Activated T-helper 2 cell treated with anti-CD3 and anti-CD28 coated beads, Interferon-gamma antibody, Interleukin-2, Interleukin-4, amounts not matched to agents 10 μg/mL and 5 μg/mL and 100 μg/mL, durations not matched to agents 14 hours and 24 hours and 36 hours (primary cell): ENCODE measurements at regions of chr6 and their contacts with region 1.

Region 1: GRCh38 chr6:47631269-47631772 is 67.1 kb upstream of the ADGRF4 start:
- DNase-seq: no peak
- H3K4me3 Mint-ChIP-seq: no peak overlapping the region
- H3K27ac Mint-ChIP-seq: no peak overlapping the region
- H3K4me1 Mint-ChIP-seq: peaks cover 8% of the 10 kb centered on the region
- H3K27me3 Mint-ChIP-seq: peaks cover 2% of the 10 kb centered on the region

Region 2: DNA sequence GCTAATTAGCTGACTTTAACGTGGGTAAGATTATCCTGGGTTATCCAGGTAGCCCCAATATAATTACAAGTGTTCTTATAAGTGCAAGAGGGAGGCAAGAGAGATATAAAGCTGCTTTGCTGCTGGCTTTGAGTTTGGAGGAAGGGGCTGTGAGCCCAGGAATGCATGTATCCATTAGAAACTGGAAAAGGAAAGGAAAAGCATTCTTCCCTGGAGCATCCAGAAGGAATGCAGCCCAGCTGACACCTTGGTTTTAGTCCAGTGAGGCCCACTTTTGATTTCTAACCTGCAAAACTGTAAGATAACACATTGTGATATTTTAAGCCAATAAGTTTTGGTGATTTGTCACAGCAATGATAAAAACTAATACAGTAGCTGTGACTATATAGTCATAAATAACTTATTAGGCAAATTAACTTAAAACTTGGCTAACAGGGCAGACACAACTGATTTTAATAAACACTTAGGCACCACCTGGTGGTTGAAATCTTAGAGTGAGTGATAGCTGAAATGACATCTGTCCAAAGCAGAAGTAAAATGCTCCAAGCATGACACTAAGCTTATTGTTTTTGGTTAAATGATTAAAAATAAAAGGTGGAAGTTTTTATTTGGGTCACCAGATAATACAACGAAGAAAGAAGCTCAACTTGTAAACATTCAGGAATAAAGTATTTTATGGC is 102.7 kb after region 1 on chr6:
- intact Hi-C with region 1: loop called (anchors 1 kb)
- DNase-seq: no peak
- H3K4me3 Mint-ChIP-seq: no peak overlapping the region
- H3K27ac Mint-ChIP-seq: no peak overlapping the region
- H3K4me1 Mint-ChIP-seq: no peaks in the 10 kb centered on the region
- H3K27me3 Mint-ChIP-seq: peaks cover 22% of the 10 kb centered on the region

Region 3: DNA sequence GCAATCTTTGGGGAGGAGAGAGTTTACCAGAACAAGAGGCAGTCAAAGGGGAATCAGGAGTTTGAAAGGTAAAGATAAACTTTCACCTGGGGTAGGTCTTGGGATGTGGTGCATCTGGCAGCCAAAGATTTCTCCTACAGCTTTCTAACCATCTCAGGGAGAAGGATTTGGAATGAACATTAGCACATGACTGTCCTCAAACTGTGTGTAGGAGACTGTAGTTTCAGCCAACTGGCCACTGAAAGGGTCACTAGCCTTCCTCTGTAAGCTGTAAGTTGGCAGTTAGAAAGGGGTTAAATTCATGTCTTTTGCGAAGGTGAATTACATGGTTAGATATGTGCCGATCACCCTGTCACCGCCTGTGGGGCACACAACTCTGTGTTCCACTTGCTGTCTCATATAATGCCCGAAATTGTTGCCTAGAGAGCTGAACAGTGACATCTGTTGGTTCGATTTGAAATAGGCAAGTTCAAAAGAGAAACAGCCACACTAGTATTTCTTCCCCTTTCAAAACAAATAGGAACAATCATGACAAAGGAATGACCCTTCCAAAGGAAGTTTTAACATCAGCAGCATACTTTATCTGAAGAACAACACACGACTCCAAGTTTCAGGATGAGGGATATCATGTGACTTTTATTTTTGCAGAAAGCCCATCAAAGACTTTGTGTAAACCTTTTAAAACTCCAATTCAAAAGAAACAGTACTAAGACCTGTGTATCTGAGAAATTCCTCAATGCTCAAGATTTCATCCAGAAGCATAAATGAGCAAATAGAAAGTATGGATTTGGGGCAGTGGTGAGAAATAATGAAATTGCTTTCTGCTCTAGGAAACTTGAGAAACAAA is 149.4 kb after region 1 on chr6:
- intact Hi-C with region 1: loop called (anchors 1 kb)
- DNase-seq: peak; percentile 16
- H3K4me3 Mint-ChIP-seq: no peak overlapping the region
- H3K27ac Mint-ChIP-seq: no peak overlapping the region
- H3K4me1 Mint-ChIP-seq: peaks cover 2% of the 10 kb centered on the region
- H3K27me3 Mint-ChIP-seq: peaks cover 31% of the 10 kb centered on the region

Region 4: DNA sequence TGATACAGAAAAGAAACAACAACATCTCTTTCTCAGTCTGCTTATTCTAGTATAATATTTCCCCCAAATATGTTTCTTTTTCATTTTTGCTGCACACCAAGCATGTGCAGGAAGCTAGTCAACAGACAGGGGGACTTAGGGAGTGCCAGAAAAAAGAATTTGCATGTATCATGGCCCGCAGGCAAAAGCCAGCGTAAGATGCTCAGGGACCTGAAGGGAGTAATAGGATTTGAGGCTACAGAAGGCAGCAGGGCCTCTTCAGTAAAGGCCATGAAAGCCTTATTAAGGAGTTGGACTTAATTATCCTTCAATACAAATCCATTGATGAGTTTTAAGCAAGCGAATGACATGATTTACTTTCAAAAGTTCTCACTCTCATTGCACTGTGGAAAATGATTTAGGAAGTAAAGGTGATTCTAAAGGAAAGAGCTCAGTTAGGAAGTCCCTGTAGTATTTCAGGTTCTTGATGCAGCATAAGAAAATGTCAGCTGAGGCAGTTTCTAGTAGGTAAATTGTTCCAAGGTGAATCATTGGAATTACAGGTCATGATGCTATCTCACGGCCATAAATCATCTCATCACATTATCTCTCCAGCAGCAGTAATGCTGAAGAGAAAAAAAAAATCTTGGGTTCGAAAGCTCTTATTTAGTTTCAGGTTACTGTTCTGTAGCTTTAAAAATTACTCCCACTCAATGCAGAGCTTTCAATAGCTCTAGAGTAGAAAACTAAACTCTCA is 384.9 kb after region 1 on chr6:
- intact Hi-C with region 1: no loop called
- DNase-seq: no peak
- H3K4me3 Mint-ChIP-seq: no peak overlapping the region
- H3K27ac Mint-ChIP-seq: no peak overlapping the region
- H3K4me1 Mint-ChIP-seq: no peaks in the 10 kb centered on the region
- H3K27me3 Mint-ChIP-seq: no peaks in the 10 kb centered on the region